ENCODE measurements at regions of chr3 and their contacts with region 1.

Region 1: GRCh38 chr3:196432137-196432879 is at the start of gene UBXN7:
- DNase-seq: peak; percentile 89 to 97
- H3K4me3 ChIP-seq: peak within 1 kb of the TSS; percentile 98 to 99
- H3K27ac ChIP-seq: peak within 1 kb of the TSS; percentile 97 to 98
- H3K4me1 ChIP-seq: peaks cover 0 to 23% (median 10%) of the 10 kb centered on the region in 4 donors
- H3K27me3 ChIP-seq: peaks cover 0 to 2% of the 10 kb centered on the region in 2 donors
- CTCF ChIP-seq: peak in 1 of 2 experiments; percentile 34

Region 2: GRCh38 chr3:196388956-196389355 is 43.4 kb before region 1 on chr3:
- intact Hi-C with region 1: no loop called
- DNase-seq: no peak
- H3K4me3 ChIP-seq: no peak overlapping the region
- H3K27ac ChIP-seq: no peak overlapping the region
- H3K4me1 ChIP-seq: peaks cover 0 to 10% (median 3%) of the 10 kb centered on the region in 4 donors
- H3K27me3 ChIP-seq: no peaks in the 10 kb centered on the region
- CTCF ChIP-seq: no peak

Region 3: DNA sequence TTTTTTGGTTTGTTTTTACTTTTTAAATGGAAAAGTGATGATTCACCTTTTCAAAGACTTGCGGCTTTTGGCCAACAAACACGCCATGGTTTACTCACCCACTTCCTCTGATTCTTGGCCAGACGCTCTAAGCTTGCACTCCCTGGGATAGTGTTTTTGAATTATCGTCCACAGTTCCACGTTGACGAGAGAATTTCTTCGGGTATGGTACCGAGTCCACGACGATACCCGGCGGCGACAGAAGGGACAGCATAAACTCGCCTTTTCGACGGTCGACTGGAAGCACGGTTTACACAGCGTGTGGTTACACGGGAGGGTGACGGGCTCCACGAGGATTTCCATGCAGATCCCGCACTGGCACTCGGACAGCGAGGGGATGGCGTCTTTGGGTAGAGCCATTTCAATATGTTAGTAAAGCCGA is 70.5 kb after region 1 on chr3:
- intact Hi-C with region 1: loop called (anchors 2 kb)
- DNase-seq: peak; percentile 54 to 69
- H3K4me3 ChIP-seq: peak overlapping the region; percentile 87 to 98
- H3K27ac ChIP-seq: peak overlapping the region; percentile 95 to 97
- H3K4me1 ChIP-seq: peaks cover 0 to 41% (median 19%) of the 10 kb centered on the region in 4 donors
- H3K27me3 ChIP-seq: no peaks in the 10 kb centered on the region
- CTCF ChIP-seq: no peak

Region 4: GRCh38 chr3:196883361-196883760 is 451.1 kb after region 1 on chr3:
- intact Hi-C with region 1: no loop called
- DNase-seq: no peak
- H3K4me3 ChIP-seq: no peak overlapping the region
- H3K27ac ChIP-seq: no peak overlapping the region
- H3K4me1 ChIP-seq: no peaks in the 10 kb centered on the region
- H3K27me3 ChIP-seq: no peaks in the 10 kb centered on the region
- CTCF ChIP-seq: no peak

Region 5: GRCh38 chr3:197050511-197050910 is 618.2 kb after region 1 on chr3:
- intact Hi-C with region 1: no loop called
- DNase-seq: no peak
- H3K4me3 ChIP-seq: no peak overlapping the region
- H3K27ac ChIP-seq: no peak overlapping the region
- H3K4me1 ChIP-seq: no peaks in the 10 kb centered on the region
- H3K27me3 ChIP-seq: no peaks in the 10 kb centered on the region
- CTCF ChIP-seq: no peak

Measured in tibial artery (tissue), 4 donors.